Mucosa of descending colon (tissue), 3 donors: ENCODE measurements at regions of chrX and their contacts with region 1.

Region 1: GRCh38 chrX:1649621-1650020 is 34.8 kb downstream of the ASMT start:
- DNase-seq: no peak
- ATAC-seq: no peak
- H3K4me3 ChIP-seq: no peak overlapping the region
- H3K4me1 ChIP-seq: no peaks in the 10 kb centered on the region
- CTCF ChIP-seq: no peak

Region 2: DNA sequence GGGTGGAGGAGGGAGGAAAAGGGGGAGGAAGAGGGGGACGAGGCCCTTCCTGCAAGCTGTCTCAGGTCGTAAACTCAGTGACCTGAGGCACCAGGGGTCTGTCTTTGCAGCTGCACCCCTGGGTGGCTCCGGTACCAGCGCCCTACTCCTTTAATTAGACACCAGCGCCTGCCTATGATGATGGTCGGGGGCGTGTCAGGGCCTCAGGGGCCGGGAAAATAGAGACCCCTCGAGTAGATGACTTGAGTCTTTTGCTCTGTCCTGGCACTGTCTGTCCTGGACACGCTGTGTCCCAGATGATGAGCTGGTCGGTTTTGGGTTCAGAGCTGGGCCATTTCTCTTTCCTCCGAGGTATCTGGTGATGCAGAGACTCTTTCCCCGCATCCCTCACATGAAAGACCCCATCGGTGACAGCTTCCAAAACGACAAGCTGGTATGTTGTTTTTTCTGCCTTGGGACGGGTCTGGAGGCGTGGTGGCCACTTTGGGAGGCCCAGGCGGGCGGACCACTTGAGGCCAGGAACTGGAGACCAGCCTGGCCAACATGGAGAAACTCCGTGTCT is 268.9 kb before region 1 on chrX:
- intact Hi-C with region 1: no loop called
- DNase-seq: peak; percentile 10 to 51 (median 38)
- ATAC-seq: peak; percentile 12
- H3K4me3 ChIP-seq: no peak overlapping the region
- H3K4me1 ChIP-seq: peaks cover 6% of the 10 kb centered on the region
- CTCF ChIP-seq: no peak

Region 3: DNA sequence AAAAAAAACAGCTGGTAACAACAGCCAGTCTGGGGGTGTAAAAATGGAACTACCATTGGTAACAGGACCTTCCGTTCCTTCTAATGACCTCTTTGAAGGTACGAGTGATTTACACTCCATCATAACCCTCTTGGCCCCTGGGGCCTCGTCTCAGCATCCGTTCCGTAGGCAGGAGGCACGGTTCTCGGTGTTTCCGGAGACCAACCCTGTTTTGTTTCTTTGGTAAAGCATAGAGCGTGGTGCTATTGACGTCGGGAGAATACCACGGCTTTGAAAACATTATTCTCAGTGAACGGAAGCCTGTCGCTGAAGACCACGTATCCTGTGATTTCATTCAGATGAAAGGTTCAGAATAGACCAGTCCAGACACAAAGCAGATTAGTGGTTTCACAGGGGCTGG is 164.2 kb after region 1 on chrX:
- intact Hi-C with region 1: no loop called
- DNase-seq: no peak
- ATAC-seq: no peak
- H3K4me3 ChIP-seq: no peak overlapping the region
- H3K4me1 ChIP-seq: no peaks in the 10 kb centered on the region
- CTCF ChIP-seq: no peak

Region 4: DNA sequence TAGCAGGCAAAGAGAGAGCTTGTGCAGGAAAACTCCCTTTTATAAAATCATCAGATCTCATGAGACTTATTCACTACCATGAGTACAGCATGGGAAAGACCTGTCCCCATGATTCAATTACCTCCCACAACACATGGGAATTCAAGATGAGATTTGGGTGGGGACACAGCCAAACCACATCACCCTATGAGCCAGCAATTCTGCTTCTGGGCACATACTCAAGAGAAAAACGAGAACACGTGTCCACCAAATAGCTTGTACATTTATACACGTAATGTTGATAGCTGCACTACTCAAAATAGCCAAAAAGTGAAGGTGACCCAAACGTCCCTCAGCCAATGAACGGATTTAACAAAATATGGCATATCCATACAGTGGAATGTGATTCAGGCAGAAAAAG is 945.6 kb after region 1 on chrX:
- intact Hi-C with region 1: loop called in 1 of 2 experiments (anchors 10 kb)
- DNase-seq: no peak
- ATAC-seq: no peak
- H3K4me3 ChIP-seq: no peak overlapping the region
- H3K4me1 ChIP-seq: peaks cover 5% of the 10 kb centered on the region
- CTCF ChIP-seq: no peak